ENCODE measurements at regions of chr3 and their contacts with region 1.

Region 1: DNA sequence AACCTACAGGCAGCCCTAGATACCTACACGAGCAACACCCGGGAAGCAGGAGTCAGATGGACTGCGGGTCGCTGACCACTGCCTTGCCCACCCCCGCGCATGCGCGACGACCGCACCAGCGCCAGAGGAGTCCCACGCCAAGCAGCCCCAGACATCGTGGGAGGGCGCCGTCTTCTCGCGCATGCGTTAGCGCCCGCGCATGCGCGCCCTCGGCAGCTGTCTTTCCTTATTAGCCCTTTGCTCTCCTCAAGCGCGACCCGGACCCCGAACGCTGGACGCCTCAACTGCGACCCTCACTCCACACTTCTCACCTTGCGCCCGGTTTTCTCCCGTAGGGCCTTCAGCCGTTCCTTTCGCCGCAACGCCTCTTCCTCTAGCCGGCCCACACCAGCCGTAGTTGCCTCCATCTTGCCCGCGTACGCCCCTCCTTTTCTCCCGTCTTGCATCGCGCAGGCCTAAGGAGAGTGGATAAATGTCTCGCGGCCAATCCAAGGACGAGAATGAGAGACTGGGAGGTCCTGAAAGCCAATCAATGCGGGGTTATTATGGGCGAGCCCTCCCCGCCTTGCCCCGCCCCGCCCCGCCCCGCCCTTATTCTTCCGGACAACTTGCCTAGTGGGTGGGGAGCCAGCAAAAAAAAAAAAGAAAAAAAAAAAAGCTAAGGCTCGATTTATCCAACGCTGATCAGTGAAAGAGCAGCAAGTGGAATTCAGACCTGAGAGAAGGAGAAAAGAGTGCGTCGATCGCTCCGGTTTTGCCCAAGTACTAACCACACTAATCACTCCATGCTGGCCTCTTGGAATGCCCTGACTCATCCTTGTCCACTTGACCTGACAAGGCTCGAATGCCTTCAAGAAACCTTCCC is at the start of gene CCDC12:
- DNase-seq: peak; percentile 96
- H3K4me3 Mint-ChIP-seq: peak within 1 kb of the TSS; percentile 97
- H3K27ac Mint-ChIP-seq: peak within 1 kb of the TSS; percentile 97
- H3K4me1 Mint-ChIP-seq: peaks cover 69% of the 10 kb centered on the region
- H3K27me3 Mint-ChIP-seq: no peaks in the 10 kb centered on the region
- total RNA-seq, gene CCDC12: 37.6 to 43.0 TPM

Region 2: DNA sequence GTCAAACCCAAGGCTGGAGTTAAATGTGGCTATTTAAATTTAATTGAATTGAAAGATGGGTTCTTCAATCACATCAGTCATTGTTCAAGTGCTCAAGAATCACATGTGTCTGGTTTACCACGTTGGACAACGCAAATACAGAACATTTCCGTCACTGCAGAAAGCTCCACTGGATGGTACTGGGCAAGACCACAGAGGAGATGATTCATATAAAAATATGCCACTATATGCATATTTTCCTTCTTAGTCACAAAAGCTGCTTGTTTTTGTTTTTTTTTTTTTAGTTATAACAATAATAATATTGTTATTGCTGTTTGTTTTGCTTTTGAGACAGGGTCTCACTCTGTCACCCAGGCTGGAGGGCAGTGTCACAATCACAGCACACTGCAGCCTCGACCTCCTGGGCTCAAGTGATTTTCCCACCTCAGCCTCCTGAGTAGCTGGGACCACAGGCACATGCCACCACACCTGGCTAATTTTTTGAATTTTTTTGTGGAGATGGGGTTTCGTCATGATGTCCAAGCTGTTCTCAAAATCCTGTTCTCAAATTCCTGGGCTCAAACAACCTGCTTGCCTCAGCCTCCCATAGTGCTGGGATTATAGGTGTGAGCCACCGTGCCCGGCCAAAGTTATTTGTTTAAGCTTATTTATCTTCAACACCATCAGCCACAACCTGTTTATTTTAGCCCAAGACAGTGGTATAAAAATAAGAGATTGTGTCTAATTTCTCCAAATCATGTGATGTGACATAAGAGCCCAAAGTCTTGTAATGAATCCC is 459.4 kb before region 1 on chr3:
- CTCF ChIA-PET with region 1: no interaction called
- intact Hi-C with region 1: no loop called
- DNase-seq: no peak
- H3K4me3 Mint-ChIP-seq: no peak overlapping the region
- H3K27ac Mint-ChIP-seq: no peak overlapping the region
- H3K4me1 Mint-ChIP-seq: no peaks in the 10 kb centered on the region
- H3K27me3 Mint-ChIP-seq: no peaks in the 10 kb centered on the region

Region 3: DNA sequence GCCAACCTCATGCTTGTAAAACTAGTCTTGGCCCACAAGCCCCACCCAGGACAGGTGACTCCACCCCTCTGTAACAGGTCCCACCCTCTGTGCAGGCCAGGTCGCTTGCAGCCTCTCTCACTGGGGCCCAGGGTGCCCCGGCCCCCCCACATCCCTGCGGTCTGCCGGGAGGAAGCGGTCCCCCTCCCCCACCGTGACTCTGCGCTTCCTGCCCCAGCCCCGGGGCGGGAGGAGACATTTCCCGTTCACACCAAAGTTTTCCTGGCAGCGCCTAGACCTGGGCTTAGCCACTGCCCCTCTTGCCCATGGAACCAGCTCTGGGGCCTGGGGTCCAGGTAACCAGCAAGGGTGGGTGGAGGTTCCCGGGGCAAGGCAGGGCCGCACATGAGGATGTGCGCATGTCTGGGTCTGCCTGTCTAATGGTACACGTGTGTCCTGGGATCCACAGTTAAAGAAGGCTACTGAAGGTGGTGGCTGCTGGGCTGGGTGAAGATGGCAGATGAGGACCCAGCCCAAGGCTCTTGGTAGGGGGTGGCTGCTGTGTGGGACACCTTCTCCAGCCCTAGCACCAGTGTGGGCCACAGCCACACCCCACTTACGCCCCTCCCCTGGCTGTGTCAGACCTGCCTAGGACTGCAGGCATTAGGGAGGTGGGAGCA is 11.3 kb after region 1 on chr3:
- CTCF ChIA-PET with region 1: no interaction called
- intact Hi-C with region 1: loop called (anchors 1 kb)
- DNase-seq: peak; percentile 94
- H3K4me3 Mint-ChIP-seq: peak overlapping the region; percentile 82
- H3K27ac Mint-ChIP-seq: peak overlapping the region; percentile 89
- H3K4me1 Mint-ChIP-seq: peaks cover 50% of the 10 kb centered on the region
- H3K27me3 Mint-ChIP-seq: no peaks in the 10 kb centered on the region

Region 4: GRCh38 chr3:47035634-47036033 is 59.1 kb after region 1 on chr3:
- CTCF ChIA-PET with region 1: no interaction called
- intact Hi-C with region 1: loop called (anchors 5 kb)
- DNase-seq: no peak
- H3K4me3 Mint-ChIP-seq: no peak overlapping the region
- H3K27ac Mint-ChIP-seq: no peak overlapping the region
- H3K4me1 Mint-ChIP-seq: peaks cover 40% of the 10 kb centered on the region
- H3K27me3 Mint-ChIP-seq: no peaks in the 10 kb centered on the region

Region 5: GRCh38 chr3:47282424-47283192 is 306.1 kb after region 1 on chr3 and contains the starts of genes KIF9 and KLHL18:
- CTCF ChIA-PET with region 1: no interaction called
- intact Hi-C with region 1: loop called (anchors 2 kb)
- DNase-seq: peak; percentile 95
- H3K4me3 Mint-ChIP-seq: peak within 1 kb of the TSS; percentile 99
- H3K27ac Mint-ChIP-seq: peak within 1 kb of the TSS; percentile 99
- H3K4me1 Mint-ChIP-seq: peaks cover 42% of the 10 kb centered on the region
- H3K27me3 Mint-ChIP-seq: no peaks in the 10 kb centered on the region
- total RNA-seq, gene KIF9: 4.5 to 4.9 TPM
- total RNA-seq, gene KLHL18: 20.7 to 21.6 TPM

Region 6: DNA sequence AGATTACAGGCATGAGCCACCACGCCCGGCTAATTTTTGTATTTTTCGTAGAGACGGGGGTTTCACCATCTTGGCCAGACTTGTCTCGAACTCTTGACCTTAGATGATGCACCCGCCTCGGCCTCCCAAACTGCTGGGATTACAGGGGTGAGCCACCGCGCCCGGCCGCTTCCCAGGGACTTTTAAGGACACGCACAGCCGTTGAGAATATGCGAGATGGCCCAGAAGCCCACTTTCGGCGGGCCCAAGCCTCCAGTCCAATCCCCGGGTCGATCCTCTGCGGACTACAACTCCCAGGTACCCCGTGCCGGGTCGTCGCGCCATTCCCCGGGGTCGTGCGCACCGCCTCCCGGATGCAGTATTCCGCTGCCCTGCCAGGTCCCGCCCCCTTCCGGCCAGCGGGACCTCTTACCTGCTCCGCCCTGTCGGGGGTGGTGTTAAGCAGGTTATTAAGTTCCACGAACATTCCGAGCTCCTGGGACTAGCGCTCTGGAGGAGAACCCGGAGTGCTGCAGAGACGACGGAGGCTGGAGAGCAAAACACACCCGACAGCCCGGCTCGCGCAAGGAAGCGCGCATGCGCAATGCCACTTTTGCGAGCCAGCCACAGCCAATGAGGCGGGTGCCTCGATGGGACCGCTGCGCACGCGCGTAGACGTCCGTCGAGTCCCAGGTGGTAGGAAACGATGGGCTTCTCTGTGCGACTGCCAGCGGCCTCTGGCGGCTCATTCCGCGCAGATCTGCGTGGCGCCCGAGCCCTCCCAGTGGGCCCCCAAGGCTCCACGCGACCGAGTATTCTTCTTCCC is 536.8 kb after region 1 on chr3 and contains the start of gene ELP6:
- CTCF ChIA-PET with region 1: interaction called, 3 read pairs
- intact Hi-C with region 1: loop called (anchors 1 kb)
- DNase-seq: peak; percentile 98
- H3K4me3 Mint-ChIP-seq: peak within 1 kb of the TSS; percentile 96
- H3K27ac Mint-ChIP-seq: peak within 1 kb of the TSS; percentile 97
- H3K4me1 Mint-ChIP-seq: peaks cover 15% of the 10 kb centered on the region
- H3K27me3 Mint-ChIP-seq: no peaks in the 10 kb centered on the region
- total RNA-seq, gene ELP6: 32.7 to 33.1 TPM

Region 7: DNA sequence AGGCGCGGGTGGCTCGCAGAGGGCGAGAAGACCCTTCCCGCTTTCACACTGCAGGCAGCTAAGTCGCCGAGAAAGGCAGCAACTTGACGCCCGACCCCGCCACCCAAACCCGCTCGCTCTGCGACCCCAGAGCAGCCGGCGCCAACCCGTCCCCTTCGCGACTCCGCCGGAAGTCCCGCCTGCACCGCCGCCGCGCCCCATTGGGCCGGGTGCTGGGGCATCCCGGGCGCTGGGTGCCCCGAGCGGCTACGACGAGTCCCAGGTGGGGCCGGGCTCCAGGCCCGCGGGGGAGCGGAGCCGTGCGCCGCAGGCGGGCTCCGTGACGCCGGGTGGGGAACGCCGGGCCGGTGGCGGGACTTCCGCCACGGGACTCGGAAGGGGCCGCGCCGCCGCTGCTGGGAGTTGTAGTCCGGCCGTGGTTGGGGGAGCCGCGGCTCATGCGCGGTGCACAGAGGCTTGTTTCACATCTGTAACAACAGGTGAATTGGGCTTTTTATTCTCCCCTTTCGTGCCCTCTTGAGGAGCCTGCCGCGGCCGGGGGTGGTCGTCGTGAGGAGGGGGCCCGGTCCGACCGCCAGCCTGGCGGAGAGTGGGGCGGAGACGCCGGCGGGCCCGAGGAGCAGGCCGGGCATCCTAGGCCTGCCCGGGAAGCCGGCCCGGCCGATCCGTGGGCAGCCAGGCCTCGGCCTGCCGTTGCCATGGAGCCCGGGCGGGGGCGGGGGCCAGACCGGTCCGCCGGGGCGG is 826.3 kb after region 1 on chr3 and contains the start of gene DHX30:
- CTCF ChIA-PET with region 1: no interaction called
- intact Hi-C with region 1: loop called (anchors 5 kb)
- DNase-seq: peak; percentile 87
- H3K4me3 Mint-ChIP-seq: peak within 1 kb of the TSS; percentile 96
- H3K27ac Mint-ChIP-seq: peak within 1 kb of the TSS; percentile 92
- H3K4me1 Mint-ChIP-seq: peaks cover 21% of the 10 kb centered on the region
- H3K27me3 Mint-ChIP-seq: no peaks in the 10 kb centered on the region
- total RNA-seq, gene DHX30: 65.6 to 69.9 TPM

Measured in activated naive CD4-positive, alpha-beta T cell treated with anti-CD3 and anti-CD28 coated beads for 36 hours (primary cell).